ENCODE measurements at regions of chr2 and their contacts with region 1.

Region 1: DNA sequence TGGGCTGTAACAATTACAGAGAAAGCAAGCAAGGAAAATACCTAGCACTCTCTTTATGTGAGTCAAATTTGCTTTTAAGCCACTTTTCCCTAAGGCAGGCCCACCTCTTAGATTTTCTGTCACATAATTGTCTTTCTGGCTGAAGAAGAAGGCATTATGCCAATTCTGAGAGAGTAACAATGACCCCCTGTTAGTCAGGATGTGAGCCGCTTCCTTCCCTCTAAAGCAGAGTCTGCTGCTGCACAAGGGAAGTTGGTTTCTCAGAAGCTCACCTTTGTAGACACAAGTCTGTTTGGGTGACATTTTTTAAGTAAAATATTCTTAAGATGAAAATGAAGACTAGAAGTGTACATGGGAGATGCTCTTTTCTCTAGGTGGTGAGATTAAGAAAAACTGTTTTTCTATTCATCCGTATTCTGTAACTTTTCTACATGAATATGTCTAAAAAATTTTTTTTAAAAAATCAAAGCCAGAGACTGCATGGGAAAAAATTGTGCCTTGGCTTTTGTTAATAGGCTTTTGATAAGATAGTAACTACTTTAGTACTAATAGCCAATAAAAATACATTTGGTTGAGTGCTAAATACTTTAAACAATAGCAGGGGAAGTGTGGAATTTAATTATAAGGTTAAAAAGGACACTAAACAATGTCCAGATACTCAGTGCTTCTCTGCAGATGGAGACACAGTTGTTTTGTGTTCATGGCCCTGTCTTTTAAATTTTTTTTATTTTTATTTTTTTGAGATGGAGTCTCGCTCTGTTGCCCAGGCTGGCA is 33.4 kb upstream of the VPS54 start:
- DNase-seq: no peak
- ATAC-seq: no peak
- H3K4me3 ChIP-seq: no peak overlapping the region
- H3K27ac ChIP-seq: no peak overlapping the region
- H3K4me1 ChIP-seq: no peaks in the 10 kb centered on the region
- H3K27me3 ChIP-seq: no peaks in the 10 kb centered on the region

Region 2: DNA sequence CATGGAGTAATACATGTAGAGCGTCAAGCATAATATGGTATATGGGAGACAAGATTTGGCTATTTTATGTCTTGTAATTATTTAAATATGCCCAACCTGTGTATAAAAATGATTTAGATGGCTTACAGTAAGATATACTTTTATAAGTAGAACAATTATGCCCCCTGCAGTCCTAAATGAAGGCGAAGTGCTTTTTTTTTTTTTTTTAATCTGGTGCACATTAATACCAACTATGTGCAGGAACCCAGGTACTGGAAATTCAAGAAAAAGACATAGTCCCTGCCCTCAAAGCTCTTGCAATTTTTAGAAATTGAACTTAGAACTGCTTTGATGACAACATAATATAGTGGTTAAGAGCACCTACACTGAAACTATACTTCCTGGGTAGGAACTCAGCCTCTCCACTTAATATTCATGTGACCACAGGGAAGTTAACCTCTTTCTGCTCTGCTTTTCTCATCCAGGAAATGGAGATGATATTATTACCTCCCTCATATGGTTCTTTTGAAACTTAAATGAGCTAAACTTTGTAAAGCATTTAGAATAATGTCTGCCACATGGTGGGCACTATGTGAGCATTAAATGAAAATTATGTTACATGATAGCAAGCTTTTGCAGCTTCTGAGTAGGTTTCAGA is 509.6 kb after region 1 on chr2:
- intact Hi-C with region 1: loop called in 1 of 2 experiments (anchors 5 kb)
- DNase-seq: no peak
- ATAC-seq: no peak
- H3K4me3 ChIP-seq: no peak overlapping the region
- H3K27ac ChIP-seq: no peak overlapping the region
- H3K4me1 ChIP-seq: peaks cover 0 to 3% of the 10 kb centered on the region in 2 donors
- H3K27me3 ChIP-seq: no peaks in the 10 kb centered on the region

Region 3: GRCh38 chr2:64859312-64860212 is 806.9 kb after region 1 on chr2:
- intact Hi-C with region 1: no loop called
- DNase-seq: peak; percentile 93 to 95
- ATAC-seq: peak; percentile 74
- H3K4me3 ChIP-seq: peak overlapping the region in 1 of 2 donors; percentile 24
- H3K27ac ChIP-seq: peak overlapping the region; percentile 14 to 29
- H3K4me1 ChIP-seq: peaks cover 0 to 4% of the 10 kb centered on the region in 2 donors
- H3K27me3 ChIP-seq: no peaks in the 10 kb centered on the region